ENCODE measurements at regions of chr12 and their contacts with region 1.

Region 1: DNA sequence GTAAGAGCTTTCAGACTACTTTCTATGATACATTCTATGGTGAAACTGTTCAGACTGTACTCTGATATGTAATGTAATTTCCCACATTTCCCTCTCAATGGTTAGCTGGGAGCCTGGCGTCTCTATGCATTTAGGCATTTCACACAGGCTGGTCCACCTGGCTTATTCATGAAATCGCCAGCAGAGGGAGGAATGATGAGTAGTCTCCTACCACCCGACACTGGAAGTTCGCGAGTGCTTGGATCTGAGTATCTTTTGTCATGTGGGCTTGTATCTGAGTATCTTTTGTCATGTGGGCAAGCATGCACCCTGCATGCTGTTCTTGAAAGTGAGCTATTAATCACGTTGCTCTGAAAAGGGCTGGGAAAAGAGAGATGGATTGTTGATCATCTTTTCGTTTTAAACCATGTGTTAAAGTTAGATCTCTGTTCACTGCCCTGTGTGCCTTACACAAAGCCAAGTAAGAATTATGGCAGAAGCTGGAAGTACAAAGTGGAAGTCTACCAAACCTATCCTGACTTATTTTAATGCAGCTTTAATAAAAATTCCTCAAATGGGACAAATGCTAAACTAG is 235.0 kb downstream of the ATP23 start:
- DNase-seq: peak; percentile 57
- ATAC-seq: no peak
- H3K4me3 Mint-ChIP-seq: no peak overlapping the region
- H3K27ac Mint-ChIP-seq: no peak overlapping the region
- H3K4me1 Mint-ChIP-seq: no peaks in the 10 kb centered on the region
- H3K27me3 Mint-ChIP-seq: peaks cover 27% of the 10 kb centered on the region
- CTCF ChIP-seq: peak; percentile 52

Region 2: GRCh38 chr12:58159941-58160340 is 16.4 kb before region 1 on chr12:
- CTCF ChIA-PET with region 1: interaction called, 13 read pairs
- POLR2A ChIA-PET with region 1: interaction called, 3 read pairs
- intact Hi-C with region 1: no loop called
- DNase-seq: no peak
- ATAC-seq: no peak
- H3K4me3 Mint-ChIP-seq: no peak overlapping the region
- H3K27ac Mint-ChIP-seq: no peak overlapping the region
- H3K4me1 Mint-ChIP-seq: no peaks in the 10 kb centered on the region
- H3K27me3 Mint-ChIP-seq: peaks cover 16% of the 10 kb centered on the region
- CTCF ChIP-seq: no peak

Measured in activated CD8-positive, alpha-beta T cell treated with anti-CD3 and anti-CD28 coated beads for 36 hours (primary cell).